ENCODE measurements at regions of chr6 and their contacts with region 1.

Region 1: GRCh38 chr6:6547110-6547879 is 41.2 kb upstream of the LY86 start:
- DNase-seq: peak; percentile 67 to 82
- ATAC-seq: peak; percentile 95

Region 2: DNA sequence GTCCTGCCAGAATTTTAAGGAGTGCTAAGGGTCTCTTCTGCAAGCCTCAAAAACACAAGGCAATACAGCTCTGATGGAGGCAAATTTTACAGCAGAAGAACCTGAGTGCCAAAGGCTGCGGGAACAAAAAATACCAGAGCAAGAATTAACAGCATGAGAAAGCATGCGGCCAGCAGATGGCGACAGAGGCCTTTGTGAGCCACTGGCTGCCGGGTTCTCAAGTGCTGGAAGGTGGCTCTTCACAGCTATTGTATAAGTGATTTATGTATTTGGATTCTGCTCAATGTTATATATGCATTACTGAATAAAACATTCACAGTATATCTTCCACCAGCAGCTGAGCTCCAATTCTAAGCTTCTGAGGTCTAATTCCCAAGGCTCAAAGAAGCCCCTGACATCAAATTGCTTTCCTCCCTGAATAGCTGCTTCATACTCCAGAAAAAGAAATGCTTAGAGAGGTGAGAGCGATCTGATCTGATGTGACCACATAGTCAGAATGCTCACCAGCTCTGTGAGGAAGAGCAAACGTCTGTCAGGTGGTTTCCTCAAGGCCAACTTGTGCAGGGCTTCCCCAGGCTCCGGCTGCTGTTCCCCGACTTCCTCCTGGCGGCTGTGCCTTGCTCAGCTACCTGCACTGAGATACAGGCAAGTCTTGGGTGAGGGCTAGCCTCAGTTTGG is 1403.5 kb before region 1 on chr6:
- intact Hi-C with region 1: loop called in 1 of 2 experiments (anchors 10 kb)
- DNase-seq: peak; percentile 69 to 96
- ATAC-seq: peak; percentile 91

Region 3: DNA sequence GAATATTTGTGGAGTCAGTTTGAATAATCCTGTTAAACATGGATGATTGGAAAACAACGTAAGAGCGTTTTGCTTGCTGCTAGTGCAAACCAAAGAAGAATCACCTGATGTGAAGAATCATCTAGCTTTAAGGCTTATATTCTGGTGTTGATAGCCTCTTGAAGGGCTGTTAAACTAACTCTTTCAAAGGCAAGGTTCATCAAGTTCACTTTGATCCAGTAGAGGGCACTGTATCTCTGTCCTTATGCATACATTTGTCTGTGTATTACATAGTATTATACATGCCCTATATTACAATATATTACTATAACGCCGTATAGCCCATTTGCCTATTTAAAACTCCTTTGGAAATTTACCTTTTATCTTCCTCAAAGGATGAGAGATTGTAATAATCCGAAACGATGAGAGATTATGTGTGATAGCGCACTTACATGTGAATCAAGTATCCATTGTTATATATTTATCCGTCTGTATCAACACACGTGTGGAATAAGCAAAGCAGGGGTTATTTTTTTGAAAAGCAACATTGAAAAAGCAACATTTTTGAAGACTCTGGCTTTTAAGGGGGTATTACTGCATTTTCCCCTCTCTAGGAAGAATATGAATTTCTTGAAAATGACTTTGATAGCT is 489.8 kb before region 1 on chr6:
- intact Hi-C with region 1: loop called in 1 of 2 experiments (anchors 10 kb)
- DNase-seq: no peak
- ATAC-seq: peak; percentile 74

Region 4: DNA sequence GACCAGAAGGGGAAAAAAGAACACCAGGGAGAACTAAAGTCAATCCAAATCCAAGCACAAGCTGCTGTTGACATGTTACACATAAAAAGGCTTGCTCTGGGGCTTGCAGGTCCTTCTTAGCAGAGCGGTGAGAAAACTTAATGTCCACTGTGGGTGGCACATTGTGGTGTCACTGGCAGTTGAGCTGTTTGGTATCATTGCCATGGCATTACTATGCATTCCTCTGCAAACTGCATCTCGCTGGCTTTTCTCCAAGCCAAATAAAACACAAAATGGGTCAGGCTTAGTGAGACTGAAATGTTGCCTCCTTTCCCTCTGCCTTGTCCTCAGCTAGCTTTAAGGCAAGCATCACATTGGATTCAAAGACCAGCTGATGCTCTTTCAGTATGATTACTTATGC is 82.1 kb after region 1 on chr6:
- intact Hi-C with region 1: no loop called
- DNase-seq: no peak
- ATAC-seq: no peak

Region 5: DNA sequence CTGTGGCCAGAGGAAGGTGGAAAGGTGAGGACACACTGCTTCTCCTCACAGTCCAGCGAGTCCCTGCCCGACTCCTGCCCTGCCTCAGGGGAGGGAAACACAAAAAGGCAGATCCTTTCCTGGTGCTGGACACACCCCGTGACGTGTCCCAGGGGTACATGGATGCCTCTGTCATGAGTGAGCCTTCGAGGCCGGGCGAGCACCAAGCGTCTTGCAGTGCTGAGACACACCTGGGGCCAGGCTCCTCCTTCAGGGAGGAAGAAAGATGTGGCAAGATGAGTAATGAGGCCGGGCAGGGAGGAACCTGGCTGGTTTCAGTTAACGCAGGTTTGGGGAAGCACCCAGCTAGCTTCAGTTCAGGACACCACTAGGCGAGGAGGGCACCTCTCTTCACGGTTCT is 256.3 kb after region 1 on chr6:
- intact Hi-C with region 1: no loop called
- DNase-seq: peak; percentile 55 to 75
- ATAC-seq: peak; percentile 91

Measured in left colon (tissue), 2 donors.